Calu3 (cell line): ENCODE measurements at regions of chr11 and their contacts with region 1.

Region 1: GRCh38 chr11:65888163-65888814 is at the start of gene FIBP:
- DNase-seq: peak; percentile 96
- H3K4me3 Mint-ChIP-seq: peak within 1 kb of the TSS; percentile 83
- H3K27ac Mint-ChIP-seq: peak within 1 kb of the TSS; percentile 92
- H3K4me1 Mint-ChIP-seq: peaks cover 48% of the 10 kb centered on the region
- H3K27me3 Mint-ChIP-seq: no peaks in the 10 kb centered on the region
- CTCF ChIP-seq: peak; percentile 90
- total RNA-seq, gene FIBP: 75.8 and 79.2 TPM in 2 replicates

Region 2: DNA sequence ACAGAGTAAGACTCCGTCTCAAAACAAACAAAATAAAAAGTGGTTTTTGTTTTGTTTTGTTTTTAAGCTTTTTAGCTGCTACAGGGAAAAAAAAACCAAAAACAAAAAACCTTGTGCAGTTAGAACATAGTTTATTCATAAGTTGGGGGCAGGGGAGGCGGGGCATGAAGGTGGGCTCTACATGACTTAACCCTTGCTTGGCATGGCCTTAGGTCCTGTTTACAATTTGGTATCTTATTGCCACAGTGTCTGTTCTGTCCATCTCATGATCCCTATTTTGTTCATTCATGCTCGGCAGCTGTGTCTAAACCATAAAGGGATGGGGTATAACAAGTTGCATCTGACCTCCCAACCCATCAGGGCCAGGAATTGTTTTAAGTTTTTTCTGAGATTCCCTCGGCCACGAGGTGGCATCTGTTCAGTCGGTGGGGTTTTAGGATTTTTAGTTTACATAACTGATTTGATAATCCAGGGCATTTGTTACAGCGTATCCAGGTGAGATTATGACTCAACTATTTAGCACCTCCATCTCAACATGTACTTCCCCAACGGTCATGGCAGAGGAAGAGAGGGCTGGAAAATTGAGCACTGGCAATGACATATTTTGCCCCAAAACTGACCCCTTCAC is 114.4 kb before region 1 on chr11:
- CTCF ChIA-PET with region 1: interaction called, 12 read pairs
- intact Hi-C with region 1: no loop called
- DNase-seq: no peak
- H3K4me3 Mint-ChIP-seq: no peak overlapping the region
- H3K27ac Mint-ChIP-seq: no peak overlapping the region
- H3K4me1 Mint-ChIP-seq: no peaks in the 10 kb centered on the region
- H3K27me3 Mint-ChIP-seq: no peaks in the 10 kb centered on the region
- CTCF ChIP-seq: no peak

Region 3: GRCh38 chr11:65786786-65787636 is 101.3 kb before region 1 on chr11 and contains the start of gene OVOL1:
- CTCF ChIA-PET with region 1: no interaction called
- intact Hi-C with region 1: no loop called
- DNase-seq: peak; percentile 92
- H3K4me3 Mint-ChIP-seq: peak within 1 kb of the TSS; percentile 86
- H3K27ac Mint-ChIP-seq: peak within 1 kb of the TSS; percentile 82
- H3K4me1 Mint-ChIP-seq: peaks cover 46% of the 10 kb centered on the region
- H3K27me3 Mint-ChIP-seq: no peaks in the 10 kb centered on the region
- CTCF ChIP-seq: no peak
- total RNA-seq, gene OVOL1: 12.7 and 15.2 TPM in 2 replicates

Region 4: DNA sequence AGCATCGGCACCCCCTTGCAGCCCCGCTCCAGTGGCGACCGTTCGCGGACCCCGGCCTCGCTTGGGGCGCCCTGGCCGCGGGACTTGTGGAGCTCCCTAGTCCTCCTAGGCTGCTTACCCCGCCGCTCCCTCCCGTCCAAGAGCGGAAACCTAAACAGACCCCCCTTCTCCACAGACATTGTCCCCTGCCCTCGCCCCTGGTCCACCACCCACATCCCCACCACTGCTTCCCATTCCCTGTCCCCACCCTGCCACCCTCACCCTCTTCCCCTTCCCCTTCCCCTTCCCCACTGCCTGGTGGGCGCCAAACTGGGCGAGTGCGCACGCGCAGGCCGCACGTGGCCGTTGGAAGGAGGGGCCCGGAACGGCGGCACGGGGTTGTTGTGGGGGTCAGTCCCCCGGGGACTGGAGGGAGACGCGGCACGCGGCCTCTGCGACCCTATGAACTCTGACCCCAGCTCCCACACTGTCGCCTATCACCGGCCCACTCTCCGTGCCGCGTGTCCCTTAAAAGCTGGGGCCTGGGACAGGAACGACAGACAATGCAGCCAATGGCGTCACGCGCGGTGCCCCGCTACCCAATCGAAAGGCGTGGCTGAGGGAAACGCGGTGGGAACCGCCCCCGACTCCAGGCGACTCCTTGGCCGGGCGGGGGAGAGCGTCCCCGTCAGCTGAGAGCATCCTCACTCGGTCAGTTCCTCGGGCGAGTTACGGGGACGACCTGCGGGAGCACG is 54.8 kb before region 1 on chr11 and contains the start of gene SNX32:
- CTCF ChIA-PET with region 1: no interaction called
- intact Hi-C with region 1: no loop called
- DNase-seq: peak; percentile 54
- H3K4me3 Mint-ChIP-seq: no peak within 1 kb of the TSS
- H3K27ac Mint-ChIP-seq: no peak within 1 kb of the TSS
- H3K4me1 Mint-ChIP-seq: no peaks in the 10 kb centered on the region
- H3K27me3 Mint-ChIP-seq: no peaks in the 10 kb centered on the region
- CTCF ChIP-seq: no peak
- total RNA-seq, gene SNX32: not detected in 2 replicates

Region 5: DNA sequence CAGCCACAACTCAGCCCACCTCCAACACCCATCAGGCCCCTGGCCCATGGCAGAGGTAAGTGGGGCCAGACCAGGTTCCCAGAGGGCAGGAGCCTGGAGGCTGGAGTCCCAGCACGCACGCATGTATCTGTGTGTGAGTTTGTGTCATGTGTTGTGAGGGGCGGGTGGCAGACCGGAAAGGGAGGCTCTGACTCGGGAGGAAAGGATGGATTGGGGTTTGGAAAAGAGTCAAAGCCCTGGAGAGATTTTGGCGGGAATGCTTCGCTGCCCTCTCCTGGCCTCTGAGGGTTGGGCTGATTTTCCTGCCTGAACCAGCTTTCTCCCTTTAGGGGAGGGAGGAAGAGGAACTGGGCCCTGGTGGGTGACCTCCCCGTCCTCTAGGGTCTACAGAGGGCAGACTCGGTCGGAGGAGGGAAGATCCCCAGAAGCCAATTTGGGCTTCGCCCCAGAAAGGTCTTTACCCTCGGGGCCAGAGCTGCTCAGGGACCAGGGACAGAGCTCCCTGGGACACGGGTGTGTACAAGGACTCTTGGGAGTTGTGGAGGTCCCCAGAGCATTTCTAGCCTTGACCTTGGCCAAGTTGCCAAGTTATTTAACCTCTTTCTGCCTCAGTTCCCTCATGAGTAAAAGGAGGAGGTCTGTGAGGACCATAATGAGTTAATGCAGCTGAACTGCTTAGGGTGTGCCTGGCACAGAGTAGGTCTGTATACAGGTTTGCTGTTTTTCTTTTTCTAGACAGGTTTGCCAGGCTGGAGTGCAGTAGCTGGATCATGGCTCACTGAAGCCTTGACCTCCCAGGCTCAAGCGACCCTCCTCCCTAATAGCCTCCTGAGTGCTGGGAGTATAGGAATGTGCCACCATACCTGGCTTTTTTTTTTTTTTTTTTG is 23.6 kb after region 1 on chr11:
- CTCF ChIA-PET with region 1: interaction called, 16 read pairs
- intact Hi-C with region 1: no loop called
- DNase-seq: peak; percentile 49
- H3K4me3 Mint-ChIP-seq: no peak overlapping the region
- H3K27ac Mint-ChIP-seq: peak overlapping the region; percentile 48
- H3K4me1 Mint-ChIP-seq: peaks cover 61% of the 10 kb centered on the region
- H3K27me3 Mint-ChIP-seq: no peaks in the 10 kb centered on the region
- CTCF ChIP-seq: no peak

Region 6: DNA sequence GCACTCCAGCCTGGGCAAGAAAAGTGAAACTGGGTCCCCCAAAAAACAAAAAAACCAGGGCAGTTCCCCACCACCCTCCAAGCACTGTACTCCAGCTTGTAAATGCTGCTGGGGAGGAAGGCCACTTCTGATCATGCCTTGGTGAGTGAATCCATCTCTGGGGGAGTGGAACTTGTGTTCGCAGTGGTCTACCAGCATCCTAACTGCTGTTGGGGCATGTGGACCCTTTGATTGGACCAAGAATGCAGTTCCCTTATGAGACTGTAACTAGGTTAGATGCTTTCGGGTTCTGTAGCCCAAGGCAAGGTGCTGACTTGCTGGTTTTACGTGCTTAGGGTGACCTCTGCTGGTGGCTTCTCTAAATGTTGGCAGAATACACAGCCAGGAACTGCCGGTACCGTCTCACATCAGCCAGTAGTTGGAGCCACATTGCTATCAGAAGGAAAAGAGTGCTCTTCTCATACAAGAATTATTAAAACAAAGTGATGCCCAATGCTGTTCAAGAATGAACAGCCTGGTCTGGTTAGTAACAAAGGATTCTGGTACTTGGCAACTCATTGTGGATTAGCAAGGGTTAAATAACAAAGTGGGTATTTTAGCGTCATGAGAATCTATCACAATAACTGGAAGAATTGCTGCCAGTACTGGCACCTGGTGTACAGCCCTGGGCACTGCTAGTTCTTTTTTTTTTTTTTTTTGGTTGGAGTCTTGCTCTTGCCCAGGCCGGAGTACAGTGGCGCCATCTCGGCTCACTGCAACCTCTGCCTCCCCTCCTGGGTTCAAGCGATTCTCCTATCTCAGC is 100.7 kb after region 1 on chr11:
- CTCF ChIA-PET with region 1: interaction called, 17 read pairs
- intact Hi-C with region 1: loop called (anchors 10 kb)
- DNase-seq: peak; percentile 90
- H3K4me3 Mint-ChIP-seq: no peak overlapping the region
- H3K27ac Mint-ChIP-seq: no peak overlapping the region
- H3K4me1 Mint-ChIP-seq: no peaks in the 10 kb centered on the region
- H3K27me3 Mint-ChIP-seq: no peaks in the 10 kb centered on the region
- CTCF ChIP-seq: peak; percentile 84